ENCODE measurements at regions of chr1 and their contacts with region 1.

Region 1: GRCh38 chr1:154479764-154480421 is 22.1 kb upstream of the TDRD10 start:
- DNase-seq: peak; percentile 72 to 81 (median 80)
- H3K4me3 ChIP-seq: no peak overlapping the region
- H3K27ac ChIP-seq: no peak overlapping the region
- H3K4me1 ChIP-seq: peaks cover 2 to 44% (median 21%) of the 10 kb centered on the region in 4 experiments
- H3K27me3 ChIP-seq: no peaks in the 10 kb centered on the region

Region 2: DNA sequence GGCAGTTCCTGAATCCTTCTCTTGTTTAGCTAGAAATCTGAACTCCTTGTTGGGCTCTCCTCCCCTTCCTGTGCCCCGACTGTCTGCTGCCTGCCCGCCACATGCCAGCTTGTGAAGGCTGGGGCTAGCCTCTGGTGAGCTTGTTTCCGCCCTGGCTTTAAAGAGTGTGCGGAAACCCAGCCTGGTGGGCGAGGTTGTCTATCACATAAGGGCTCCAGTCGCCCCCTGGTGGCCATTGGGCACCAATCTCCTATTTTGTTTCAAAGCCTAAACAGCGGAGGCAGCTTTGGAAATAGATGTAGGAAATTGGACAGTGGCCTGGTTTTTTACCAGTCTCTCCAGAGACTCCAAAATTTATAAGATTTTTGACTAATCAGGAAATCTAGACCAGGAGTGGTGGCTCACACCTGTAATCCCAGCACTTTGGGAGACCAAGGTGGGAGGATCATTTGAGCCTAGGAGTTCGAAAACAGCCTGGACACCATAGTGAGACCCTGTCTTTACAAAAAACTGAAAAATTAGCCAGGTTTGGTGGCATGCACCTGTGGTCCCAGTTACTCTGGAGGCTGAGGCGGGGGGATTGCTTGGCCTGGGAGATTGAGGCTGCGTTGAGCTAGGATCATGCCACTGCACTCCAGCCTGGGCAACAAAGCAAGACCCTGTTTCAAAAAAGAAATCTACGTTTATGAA is 144.7 kb before region 1 on chr1:
- CTCF ChIA-PET with region 1: interaction called, 22 read pairs
- POLR2A ChIA-PET with region 1: no interaction called
- DNase-seq: peak; percentile 91 to 97 (median 97)
- H3K4me3 ChIP-seq: no peak overlapping the region
- H3K27ac ChIP-seq: no peak overlapping the region
- H3K4me1 ChIP-seq: peaks cover 2 to 47% (median 27%) of the 10 kb centered on the region in 4 experiments
- H3K27me3 ChIP-seq: no peaks in the 10 kb centered on the region

Region 3: GRCh38 chr1:154352581-154353459 is 127.1 kb before region 1 on chr1:
- CTCF ChIA-PET with region 1: interaction called, 10 read pairs
- POLR2A ChIA-PET with region 1: no interaction called
- DNase-seq: peak; percentile 77 to 91 (median 87)
- H3K4me3 ChIP-seq: peak overlapping the region; percentile 19 to 89 (median 70)
- H3K27ac ChIP-seq: peak overlapping the region in 1 of 2 experiments; percentile 29
- H3K4me1 ChIP-seq: peaks cover 0 to 32% (median 26%) of the 10 kb centered on the region in 4 experiments
- H3K27me3 ChIP-seq: no peaks in the 10 kb centered on the region

Region 4: GRCh38 chr1:154404984-154405761 is 74.7 kb before region 1 on chr1 and contains the start of gene IL6R:
- CTCF ChIA-PET with region 1: interaction called, 11 read pairs
- POLR2A ChIA-PET with region 1: no interaction called
- DNase-seq: peak; percentile 96 to 97 (median 96)
- H3K4me3 ChIP-seq: peak within 1 kb of the TSS; percentile 27 to 89 (median 71)
- H3K27ac ChIP-seq: peak within 1 kb of the TSS; percentile 42 to 80
- H3K4me1 ChIP-seq: peaks cover 20 to 90% (median 85%) of the 10 kb centered on the region in 4 experiments
- H3K27me3 ChIP-seq: no peaks in the 10 kb centered on the region

Region 5: DNA sequence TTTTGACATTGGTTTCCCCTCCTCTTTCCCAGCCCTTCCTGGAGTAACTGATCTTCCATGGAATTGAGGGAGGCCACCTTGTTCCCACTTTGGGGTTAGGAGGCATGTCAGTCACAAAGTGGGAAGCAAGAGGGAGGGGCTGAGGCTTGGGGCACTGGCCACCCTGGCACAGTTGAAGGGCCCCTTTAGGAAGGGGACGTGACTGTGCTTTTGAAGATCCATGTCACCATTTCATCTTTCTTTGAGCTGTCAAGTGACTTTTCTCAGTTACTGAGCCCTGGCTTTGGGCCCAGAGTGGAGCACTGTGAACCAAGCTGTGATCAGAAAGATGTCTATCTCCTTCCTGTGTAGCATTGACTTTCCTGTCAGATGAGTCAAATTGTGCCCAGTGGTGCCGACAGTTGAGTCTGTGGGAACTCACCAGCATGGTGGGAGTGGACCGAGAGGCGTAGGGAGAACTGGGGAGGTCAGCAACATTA is 16.3 kb before region 1 on chr1:
- CTCF ChIA-PET with region 1: interaction called, 34 read pairs
- POLR2A ChIA-PET with region 1: no interaction called
- DNase-seq: peak in 2 of 3 donors; percentile 78 to 80
- H3K4me3 ChIP-seq: peak overlapping the region in 5 of 7 experiments; percentile 0 to 59 (median 36)
- H3K27ac ChIP-seq: peak overlapping the region; percentile 43 to 69
- H3K4me1 ChIP-seq: peaks cover 8 to 61% (median 50%) of the 10 kb centered on the region in 4 experiments
- H3K27me3 ChIP-seq: no peaks in the 10 kb centered on the region

Region 6: GRCh38 chr1:154493276-154493675 is 13.4 kb after region 1 on chr1:
- CTCF ChIA-PET with region 1: interaction called, 38 read pairs
- POLR2A ChIA-PET with region 1: no interaction called
- DNase-seq: peak; percentile 44 to 61 (median 45)
- H3K4me3 ChIP-seq: peak overlapping the region in 4 of 7 experiments; percentile 17 to 56 (median 52)
- H3K27ac ChIP-seq: no peak overlapping the region
- H3K4me1 ChIP-seq: peaks cover 20 to 60% (median 36%) of the 10 kb centered on the region in 4 experiments
- H3K27me3 ChIP-seq: no peaks in the 10 kb centered on the region

Region 7: GRCh38 chr1:154539507-154540483 is 59.9 kb after region 1 on chr1:
- CTCF ChIA-PET with region 1: interaction called, 341 read pairs
- POLR2A ChIA-PET with region 1: no interaction called
- DNase-seq: no peak
- H3K4me3 ChIP-seq: no peak overlapping the region
- H3K27ac ChIP-seq: no peak overlapping the region
- H3K4me1 ChIP-seq: no peaks in the 10 kb centered on the region
- H3K27me3 ChIP-seq: peaks cover 0 to 2% (median 0%) of the 10 kb centered on the region in 5 experiments